Caki2 (cell line): ENCODE measurements at regions of chr4 and their contacts with region 1.

Region 1: GRCh38 chr4:40621592-40622512 is 7.8 kb downstream of the RBM47 start:
- DNase-seq: peak; percentile 86

Region 2: GRCh38 chr4:40369437-40370274 is 252.2 kb before region 1 on chr4:
- in situ Hi-C with region 1: no loop called
- DNase-seq: no peak

Region 3: GRCh38 chr4:40486534-40486933 is 135.3 kb before region 1 on chr4:
- in situ Hi-C with region 1: loop called (anchors 25 kb)
- DNase-seq: no peak

Region 4: GRCh38 chr4:40525811-40526598 is 95.8 kb before region 1 on chr4:
- in situ Hi-C with region 1: no loop called
- DNase-seq: peak; percentile 78